Activated CD4-positive, alpha-beta memory T cell treated with anti-CD3 and anti-CD28 coated beads for 36 hours (primary cell): ENCODE measurements at regions of chr2 and their contacts with region 1.

Region 1: DNA sequence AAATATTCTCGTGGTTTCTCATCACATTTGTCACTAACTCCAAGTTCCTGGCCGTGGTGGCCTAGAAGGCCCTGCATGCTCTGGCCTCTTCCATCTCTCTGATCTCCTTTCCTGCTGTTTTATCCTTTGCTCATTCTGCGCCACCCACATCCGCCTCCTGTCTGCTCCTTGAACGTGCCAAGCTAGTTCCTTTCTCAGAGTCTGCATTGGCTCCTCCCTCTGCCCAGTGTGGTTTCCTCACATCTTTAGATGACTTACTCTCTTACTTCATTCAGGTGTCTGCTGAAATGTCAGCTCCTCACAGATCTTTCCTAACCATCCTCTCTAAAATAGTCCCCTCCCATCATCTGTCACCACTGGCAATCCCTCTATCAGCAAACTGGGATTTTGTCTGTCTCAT is 158.6 kb upstream of the RBMS1 start:
- DNase-seq: peak; percentile 82
- H3K4me3 Mint-ChIP-seq: no peak overlapping the region
- H3K27ac Mint-ChIP-seq: peak overlapping the region; percentile 30
- H3K4me1 Mint-ChIP-seq: peaks cover 26% of the 10 kb centered on the region
- H3K27me3 Mint-ChIP-seq: peaks cover 1% of the 10 kb centered on the region

Region 2: DNA sequence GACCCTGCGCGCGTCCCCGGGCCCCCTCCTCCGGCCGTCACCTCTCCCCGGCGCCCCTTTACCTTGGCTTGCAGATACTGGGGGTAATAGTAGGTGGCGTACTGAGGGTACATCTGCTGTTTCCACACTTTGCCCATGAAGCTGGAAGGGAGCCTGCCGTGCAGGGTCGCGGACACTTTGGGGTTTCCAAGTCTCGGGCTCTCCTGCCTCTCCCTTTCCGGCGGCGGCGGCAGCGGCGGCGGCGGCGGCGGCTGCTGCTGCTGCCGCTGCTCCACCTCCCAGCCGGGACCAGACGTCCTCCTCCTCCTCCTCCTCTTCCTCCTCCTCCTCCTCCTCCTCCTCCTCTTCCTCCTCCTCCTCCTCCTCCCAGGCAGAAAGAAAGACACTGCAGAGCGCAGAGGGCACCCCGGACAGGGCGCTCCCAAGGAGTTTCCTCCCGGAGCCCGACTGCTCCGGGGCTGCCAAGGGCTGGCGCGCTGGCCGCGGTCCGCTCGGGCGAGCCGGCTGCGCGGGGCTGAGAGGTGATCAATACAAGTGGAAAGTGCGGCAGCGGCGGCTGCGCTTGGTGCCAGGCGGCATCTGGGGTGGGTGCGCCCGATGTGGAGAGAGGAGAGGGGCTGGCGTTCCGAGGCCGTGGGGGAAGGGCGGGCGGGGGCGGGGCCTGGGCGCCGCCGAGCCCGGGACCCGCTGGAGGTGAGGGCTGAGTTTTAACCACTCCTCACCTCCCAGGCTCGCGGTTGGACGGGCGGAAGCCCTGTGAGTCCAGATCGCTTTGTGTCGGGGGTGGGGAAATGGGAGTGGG is 158.8 kb before region 1 on chr2 and contains the start of gene RBMS1:
- CTCF ChIA-PET with region 1: no interaction called
- POLR2A ChIA-PET with region 1: no interaction called
- intact Hi-C with region 1: loop called (anchors 10 kb)
- DNase-seq: peak; percentile 59
- H3K4me3 Mint-ChIP-seq: peak within 1 kb of the TSS; percentile 95
- H3K27ac Mint-ChIP-seq: peak within 1 kb of the TSS; percentile 93
- H3K4me1 Mint-ChIP-seq: peaks cover 36% of the 10 kb centered on the region
- H3K27me3 Mint-ChIP-seq: no peaks in the 10 kb centered on the region
- total RNA-seq, gene RBMS1: 37.9 to 40.0 TPM

Region 3: DNA sequence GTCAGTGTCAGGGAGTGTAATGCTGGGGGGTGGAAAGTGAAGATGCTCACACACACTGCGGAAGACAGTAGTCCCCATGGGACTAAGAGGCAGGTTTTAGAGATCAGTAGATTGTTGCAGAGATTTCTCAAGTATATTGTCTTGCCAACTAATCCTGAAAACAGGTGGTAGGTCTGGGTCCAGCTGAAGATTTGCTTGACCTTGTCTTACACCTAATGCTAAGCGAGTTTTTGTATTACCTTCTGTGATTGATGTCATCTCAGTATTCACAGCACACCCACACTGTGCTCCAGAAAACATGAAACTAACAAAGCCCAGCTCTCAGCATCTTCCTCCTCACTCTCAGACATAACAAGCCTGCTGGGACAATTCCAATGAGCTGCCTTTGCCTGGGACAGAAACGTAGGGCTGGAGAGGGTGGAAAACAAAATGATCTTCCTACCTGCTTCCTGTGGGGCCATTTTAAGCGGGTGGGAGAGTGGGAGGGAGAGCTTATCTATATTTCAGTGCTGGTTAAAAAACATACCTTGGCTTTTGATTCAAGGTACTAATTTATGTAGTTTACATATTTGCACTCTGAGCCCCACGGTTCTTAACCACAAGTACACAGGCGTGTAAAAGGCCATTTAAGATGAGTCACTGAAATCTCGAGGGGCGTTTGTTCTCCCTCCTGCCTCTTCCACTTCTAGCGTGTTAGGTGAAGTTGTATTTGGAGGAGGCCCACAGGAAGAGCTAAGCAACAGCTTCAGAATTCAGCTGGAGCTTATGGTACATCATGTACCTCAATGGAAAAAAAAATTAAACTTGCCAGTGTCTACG is 135.5 kb before region 1 on chr2:
- CTCF ChIA-PET with region 1: no interaction called
- POLR2A ChIA-PET with region 1: no interaction called
- intact Hi-C with region 1: loop called (anchors 5 kb)
- DNase-seq: peak; percentile 26
- H3K4me3 Mint-ChIP-seq: no peak overlapping the region
- H3K27ac Mint-ChIP-seq: peak overlapping the region; percentile 10
- H3K4me1 Mint-ChIP-seq: peaks cover 33% of the 10 kb centered on the region
- H3K27me3 Mint-ChIP-seq: no peaks in the 10 kb centered on the region

Region 4: GRCh38 chr2:160666154-160667060 is 14.2 kb after region 1 on chr2:
- CTCF ChIA-PET with region 1: no interaction called
- POLR2A ChIA-PET with region 1: no interaction called
- intact Hi-C with region 1: loop called (anchors 1 kb)
- DNase-seq: no peak
- H3K4me3 Mint-ChIP-seq: no peak overlapping the region
- H3K27ac Mint-ChIP-seq: no peak overlapping the region
- H3K4me1 Mint-ChIP-seq: peaks cover 15% of the 10 kb centered on the region
- H3K27me3 Mint-ChIP-seq: no peaks in the 10 kb centered on the region

Region 5: GRCh38 chr2:160910681-160911080 is 258.4 kb after region 1 on chr2:
- CTCF ChIA-PET with region 1: no interaction called
- POLR2A ChIA-PET with region 1: no interaction called
- intact Hi-C with region 1: no loop called
- DNase-seq: no peak
- H3K4me3 Mint-ChIP-seq: no peak overlapping the region
- H3K27ac Mint-ChIP-seq: no peak overlapping the region
- H3K4me1 Mint-ChIP-seq: no peaks in the 10 kb centered on the region
- H3K27me3 Mint-ChIP-seq: peaks cover 2% of the 10 kb centered on the region